K562 (cell line): ENCODE measurements at regions of chr6 and their contacts with region 1.

Region 1: DNA sequence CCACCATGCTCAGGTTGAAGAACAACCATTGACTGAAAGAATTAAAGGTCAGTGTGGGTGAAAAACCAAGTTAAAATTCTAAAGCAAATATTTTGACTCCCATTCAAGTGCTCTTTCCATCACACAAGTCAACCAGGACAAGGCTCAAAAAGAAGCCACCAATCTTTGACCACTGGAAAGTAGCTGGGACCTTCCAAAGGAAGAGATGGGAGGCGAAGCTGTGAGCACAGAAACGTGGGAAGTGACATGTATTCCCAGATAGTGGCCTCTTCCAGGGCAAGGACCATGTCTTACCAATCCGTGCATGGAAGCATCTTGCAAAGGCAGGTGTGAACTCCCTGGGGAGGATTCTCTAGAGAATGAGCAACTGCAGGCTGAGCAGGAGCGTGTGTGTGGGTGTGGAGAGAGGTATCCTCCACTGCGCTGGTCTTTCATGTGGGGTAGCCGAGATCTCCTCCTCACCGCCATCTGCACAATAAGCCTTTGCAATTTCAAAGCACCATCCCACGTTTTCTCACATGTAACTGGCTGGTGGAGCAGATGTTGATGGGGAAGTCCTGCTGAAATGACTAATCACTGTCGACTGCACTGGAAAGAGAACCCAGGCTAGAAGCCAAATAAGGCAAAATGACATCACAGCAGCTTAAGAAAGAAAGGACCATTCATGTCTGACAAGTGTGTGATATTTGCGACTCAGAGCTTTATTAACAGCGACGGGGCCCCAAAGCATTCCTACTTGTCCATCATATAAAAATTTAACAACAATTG is 189.4 kb upstream of the RREB1 start:
- DNase-seq: peak; percentile 29 to 41 (median 34)
- ATAC-seq: peak; percentile 24
- H3K4me3 ChIP-seq: no peak overlapping the region
- H3K27ac ChIP-seq: no peak overlapping the region
- H3K4me1 ChIP-seq: peaks cover 5 to 13% of the 10 kb centered on the region in 2 experiments; a peak in 4 of 5 replicates
- H3K27me3 ChIP-seq: no peaks in the 10 kb centered on the region
- CTCF ChIP-seq: no peak
- EP300 ChIP-seq: no peak
- POLR2A ChIP-seq: no peak
- RAD21 ChIP-seq: no peak

Region 2: DNA sequence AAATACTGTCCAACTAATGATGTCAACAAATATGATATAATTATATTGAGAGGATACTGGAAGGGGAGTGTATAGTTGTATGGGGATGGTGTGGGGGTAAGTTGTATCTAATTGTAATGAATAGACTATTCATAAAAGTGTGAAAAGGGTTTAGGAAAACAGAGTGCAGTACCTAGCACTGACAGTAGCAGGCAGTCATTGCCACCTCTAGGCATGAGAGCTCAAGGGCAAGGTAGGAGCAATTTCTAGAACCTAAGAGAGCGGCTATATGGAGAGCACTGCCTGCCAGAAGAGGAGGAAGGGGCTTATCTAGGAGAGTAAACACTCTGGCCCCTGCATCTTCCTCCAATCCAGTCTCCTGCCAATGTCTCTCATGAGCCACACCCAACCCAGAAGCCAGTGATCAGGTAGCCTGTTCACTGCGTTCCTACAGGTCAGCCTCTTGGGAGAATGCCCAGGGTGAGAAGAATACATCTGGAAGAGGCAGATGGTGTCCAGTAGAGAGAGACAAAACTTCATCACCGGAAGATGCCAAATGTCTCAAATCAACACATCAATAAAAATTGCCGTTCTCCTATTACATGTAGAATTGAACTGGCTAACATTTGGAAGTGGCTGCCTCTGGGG is 129.9 kb before region 1 on chr6:
- CTCF ChIA-PET with region 1: no interaction called
- POLR2A ChIA-PET with region 1: interaction called, 3 read pairs
- in situ Hi-C with region 1: no loop called
- intact Hi-C with region 1: loop called (anchors 10 kb)
- DNase-seq: peak; percentile 50 to 58 (median 58)
- ATAC-seq: peak; percentile 84
- H3K4me3 ChIP-seq: no peak overlapping the region
- H3K27ac ChIP-seq: no peak overlapping the region
- H3K4me1 ChIP-seq: peaks cover 0 to 20% of the 10 kb centered on the region in 2 experiments; a peak in 4 of 5 replicates
- H3K27me3 ChIP-seq: no peaks in the 10 kb centered on the region
- CTCF ChIP-seq: peak; percentile 69 to 82 (median 81)
- EP300 ChIP-seq: no peak
- POLR2A ChIP-seq: no peak
- RAD21 ChIP-seq: peak; percentile 77 to 85

Region 3: DNA sequence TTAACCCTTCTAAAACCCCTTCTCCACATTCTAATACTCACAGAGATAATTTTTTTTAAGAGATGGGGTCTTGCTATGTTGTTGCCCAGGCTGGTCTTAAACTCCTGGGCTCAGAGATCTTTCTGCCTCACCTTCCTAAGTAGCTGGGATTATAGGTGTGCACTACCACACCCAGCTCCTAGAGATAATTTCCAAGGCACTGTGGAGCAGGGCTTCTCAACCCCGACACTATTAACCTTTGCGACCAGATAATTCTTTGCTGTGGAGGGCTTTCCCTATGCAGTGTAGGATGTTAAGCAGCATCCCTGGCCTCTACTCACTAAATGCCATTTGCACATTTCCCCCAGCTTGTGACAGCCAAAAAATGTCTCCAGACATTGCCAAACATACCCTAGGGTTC is 180.6 kb after region 1 on chr6:
- CTCF ChIA-PET with region 1: no interaction called
- POLR2A ChIA-PET with region 1: no interaction called
- in situ Hi-C with region 1: no loop called
- intact Hi-C with region 1: no loop called
- DNase-seq: no peak
- ATAC-seq: peak; percentile 9; the same call in 1 of the 3 replicates
- H3K4me3 ChIP-seq: no peak overlapping the region
- H3K27ac ChIP-seq: no peak overlapping the region
- H3K4me1 ChIP-seq: peaks cover 21% of the 10 kb centered on the region in 2 experiments
- H3K27me3 ChIP-seq: no peaks in the 10 kb centered on the region
- CTCF ChIP-seq: no peak
- EP300 ChIP-seq: no peak
- POLR2A ChIP-seq: no peak
- RAD21 ChIP-seq: no peak